ENCODE measurements at regions of chr12 and their contacts with region 1.

Region 1: GRCh38 chr12:69359531-69360347 is at the start of gene YEATS4:
- DNase-seq: peak; percentile 97
- H3K4me3 Mint-ChIP-seq: peak within 1 kb of the TSS; percentile 71
- H3K27ac Mint-ChIP-seq: peak within 1 kb of the TSS; percentile 89
- H3K4me1 Mint-ChIP-seq: peaks cover 33% of the 10 kb centered on the region
- H3K27me3 Mint-ChIP-seq: no peaks in the 10 kb centered on the region
- total RNA-seq, gene YEATS4: 52.3 to 53.5 TPM

Region 2: GRCh38 chr12:69157023-69157655 is 202.6 kb before region 1 on chr12:
- CTCF ChIA-PET with region 1: interaction called, 5 read pairs
- intact Hi-C with region 1: loop called (anchors 1 kb)
- DNase-seq: peak; percentile 96
- H3K4me3 Mint-ChIP-seq: peak overlapping the region; percentile 43
- H3K27ac Mint-ChIP-seq: no peak overlapping the region
- H3K4me1 Mint-ChIP-seq: peaks cover 51% of the 10 kb centered on the region
- H3K27me3 Mint-ChIP-seq: no peaks in the 10 kb centered on the region

Region 3: DNA sequence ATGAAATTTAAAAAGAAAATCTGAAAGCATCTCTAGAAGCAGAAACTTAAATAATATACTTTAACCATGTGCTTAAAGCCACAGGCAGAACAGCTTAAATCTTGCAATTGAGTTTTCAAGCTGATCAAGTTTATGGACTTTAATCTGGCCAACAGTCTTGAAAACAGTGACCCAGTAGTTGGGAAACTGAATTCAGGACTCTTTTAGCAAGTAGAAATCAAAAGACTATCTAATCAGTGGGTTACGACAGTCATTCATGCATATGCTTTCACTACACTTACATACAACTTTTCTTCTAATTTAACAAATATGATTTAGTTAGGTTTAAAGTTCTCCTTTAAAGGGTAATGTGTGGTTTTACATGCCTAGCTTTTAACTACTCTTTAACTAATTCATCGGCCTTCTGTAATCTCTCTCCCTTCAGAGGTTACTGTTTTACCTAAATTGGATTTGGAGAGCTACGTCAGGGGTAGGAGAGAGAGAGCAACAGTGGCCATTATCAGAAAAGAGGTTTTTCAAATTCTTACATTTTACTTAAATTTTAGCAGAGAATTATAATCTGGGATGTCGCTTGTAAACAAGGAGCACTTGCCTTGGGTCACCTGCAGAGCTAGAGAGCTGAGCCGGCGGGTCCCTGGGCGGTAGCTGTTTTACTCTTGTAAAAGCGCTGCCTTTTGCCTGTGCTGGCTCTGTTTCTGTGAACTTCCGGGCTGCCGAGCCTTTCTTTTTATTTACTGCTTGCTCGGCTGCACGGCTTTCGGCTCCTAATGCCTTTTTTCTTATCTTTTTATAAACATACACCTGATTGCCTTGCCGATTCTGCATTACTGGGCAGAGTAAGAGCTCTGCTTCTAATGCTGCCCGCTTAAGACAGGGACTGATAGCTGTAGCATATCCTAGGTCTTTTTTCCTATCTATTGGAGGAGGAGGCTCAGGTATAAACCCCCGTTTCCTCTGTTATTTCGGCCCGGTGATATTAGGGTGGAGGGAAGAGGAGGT is 29.0 kb before region 1 on chr12:
- CTCF ChIA-PET with region 1: interaction called, 15 read pairs
- intact Hi-C with region 1: loop called (anchors 1 kb)
- DNase-seq: peak; percentile 74
- H3K4me3 Mint-ChIP-seq: peak overlapping the region; percentile 80
- H3K27ac Mint-ChIP-seq: peak overlapping the region; percentile 90
- H3K4me1 Mint-ChIP-seq: peaks cover 60% of the 10 kb centered on the region
- H3K27me3 Mint-ChIP-seq: no peaks in the 10 kb centered on the region

Region 4: GRCh38 chr12:69470189-69471075 is 110.7 kb after region 1 on chr12 and contains the start of gene FRS2:
- CTCF ChIA-PET with region 1: no interaction called
- intact Hi-C with region 1: loop called (anchors 1 kb)
- DNase-seq: peak; percentile 93
- H3K4me3 Mint-ChIP-seq: peak within 1 kb of the TSS; percentile 98
- H3K27ac Mint-ChIP-seq: peak within 1 kb of the TSS; percentile 96
- H3K4me1 Mint-ChIP-seq: peaks cover 42% of the 10 kb centered on the region
- H3K27me3 Mint-ChIP-seq: no peaks in the 10 kb centered on the region
- total RNA-seq, gene FRS2: 7.9 TPM

Region 5: GRCh38 chr12:69639400-69640016 is 279.8 kb after region 1 on chr12:
- CTCF ChIA-PET with region 1: interaction called, 15 read pairs
- intact Hi-C with region 1: loop called (anchors 1 kb)
- DNase-seq: peak; percentile 74
- H3K4me3 Mint-ChIP-seq: no peak overlapping the region
- H3K27ac Mint-ChIP-seq: no peak overlapping the region
- H3K4me1 Mint-ChIP-seq: peaks cover 2% of the 10 kb centered on the region
- H3K27me3 Mint-ChIP-seq: no peaks in the 10 kb centered on the region

Region 6: GRCh38 chr12:70242695-70243509 is 883.2 kb after region 1 on chr12 and contains the start of gene CNOT2:
- CTCF ChIA-PET with region 1: no interaction called
- intact Hi-C with region 1: loop called (anchors 1 kb)
- DNase-seq: peak; percentile 94
- H3K4me3 Mint-ChIP-seq: peak within 1 kb of the TSS; percentile 99
- H3K27ac Mint-ChIP-seq: peak within 1 kb of the TSS; percentile 100
- H3K4me1 Mint-ChIP-seq: peaks cover 48% of the 10 kb centered on the region
- H3K27me3 Mint-ChIP-seq: no peaks in the 10 kb centered on the region
- total RNA-seq, gene CNOT2: 66.0 to 66.2 TPM

Region 7: GRCh38 chr12:70719672-70720420 is 1360.1 kb after region 1 on chr12:
- CTCF ChIA-PET with region 1: no interaction called
- intact Hi-C with region 1: loop called (anchors 10 kb)
- DNase-seq: peak; percentile 28
- H3K4me3 Mint-ChIP-seq: peak overlapping the region; percentile 45
- H3K27ac Mint-ChIP-seq: no peak overlapping the region
- H3K4me1 Mint-ChIP-seq: peaks cover 6% of the 10 kb centered on the region
- H3K27me3 Mint-ChIP-seq: peaks cover 9% of the 10 kb centered on the region

Measured in activated naive CD4-positive, alpha-beta T cell treated with anti-CD3 and anti-CD28 coated beads for 36 hours (primary cell).